ENCODE measurements at regions of chr11 and their contacts with region 1.

Region 1: DNA sequence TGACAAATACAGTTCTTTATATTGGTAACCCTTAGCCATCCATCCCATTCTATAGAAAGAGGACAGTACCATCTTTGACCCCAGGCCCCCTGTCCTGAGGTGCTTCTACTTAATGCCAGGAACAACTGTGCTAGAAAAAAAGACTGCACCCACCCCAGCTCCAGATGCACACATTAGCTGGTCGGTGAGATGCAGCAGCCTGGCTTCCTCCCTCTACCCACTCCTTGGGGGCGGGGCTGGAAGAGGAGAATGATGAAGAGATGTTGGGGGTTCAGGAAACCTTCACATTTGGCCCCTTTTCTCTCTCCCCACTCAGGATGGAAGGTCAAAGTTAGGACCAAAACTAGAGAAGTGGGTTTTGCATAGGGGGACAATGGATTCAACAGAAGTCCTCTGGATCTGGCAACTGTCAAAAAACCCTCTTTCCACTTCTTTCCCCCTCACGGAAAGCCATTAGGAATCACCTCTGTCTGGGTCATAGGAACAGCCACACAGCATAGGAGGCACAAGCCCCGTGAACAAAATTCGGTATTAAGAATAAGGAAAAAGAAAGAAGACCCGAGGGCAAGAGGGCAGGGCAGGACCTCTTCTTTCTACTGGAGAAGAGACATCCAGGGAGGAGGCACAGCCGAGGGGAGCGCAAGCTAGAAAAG is 755 bp downstream of the NRIP3 start:
- DNase-seq: no peak
- ATAC-seq: no peak
- H3K4me3 ChIP-seq: no peak overlapping the region
- H3K27ac ChIP-seq: no peak overlapping the region
- H3K4me1 ChIP-seq: peaks cover 9% of the 10 kb centered on the region; the same call in 1 of the 2 replicates
- H3K27me3 ChIP-seq: no peaks in the 10 kb centered on the region
- CTCF ChIP-seq: no peak

Region 2: DNA sequence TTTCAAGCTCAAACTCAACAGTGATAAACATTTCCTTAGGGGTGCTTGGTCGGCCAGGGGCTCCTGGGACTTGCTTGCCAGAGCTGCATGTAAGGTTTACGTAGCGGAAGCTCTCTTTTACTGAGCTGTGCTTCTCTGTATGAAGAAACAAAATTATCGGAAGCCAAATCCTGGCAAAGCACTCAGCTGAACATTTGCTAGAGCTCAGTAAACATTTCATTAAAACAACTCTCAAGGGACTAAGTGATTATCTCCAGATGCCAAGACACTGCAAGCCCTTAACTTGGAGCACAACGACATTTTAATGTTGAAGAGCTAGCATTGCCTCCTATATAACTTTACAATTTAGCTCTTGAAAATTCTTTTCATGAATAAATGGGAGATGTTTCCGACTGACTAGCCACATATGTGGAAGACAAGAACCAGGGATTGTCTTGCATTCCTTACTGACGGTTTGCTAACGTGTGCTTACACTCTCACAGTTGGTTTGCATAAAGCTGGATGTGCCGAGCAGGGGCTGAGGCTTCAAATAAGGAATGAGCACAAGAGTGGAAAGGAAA is 45.0 kb after region 1 on chr11:
- CTCF ChIA-PET with region 1: no interaction called
- POLR2A ChIA-PET with region 1: interaction called, 10 read pairs
- intact Hi-C with region 1: no loop called
- DNase-seq: no peak
- ATAC-seq: no peak
- H3K4me3 ChIP-seq: no peak overlapping the region
- H3K27ac ChIP-seq: no peak overlapping the region
- H3K4me1 ChIP-seq: peaks cover 5% of the 10 kb centered on the region; the same call in 1 of the 2 replicates
- H3K27me3 ChIP-seq: no peaks in the 10 kb centered on the region
- CTCF ChIP-seq: no peak

Measured in PC-3 (cell line).